Common myeloid progenitor, CD34-positive (primary cell): ENCODE measurements at regions of chr18 and their contacts with region 1.

Region 1: GRCh38 chr18:35029770-35030169 is 11.4 kb upstream of the MAPRE2 start:
- DNase-seq: peak in 2 of 3 donors; percentile 68 to 77
- H3K4me3 ChIP-seq: peak overlapping the region in 6 of 7 experiments; percentile 7 to 72 (median 50)
- H3K27ac ChIP-seq: peak overlapping the region in 1 of 2 experiments; percentile 69
- H3K4me1 ChIP-seq: peaks cover 12 to 32% (median 15%) of the 10 kb centered on the region in 4 experiments
- H3K27me3 ChIP-seq: no peaks in the 10 kb centered on the region

Region 2: GRCh38 chr18:34514238-34514637 is 515.5 kb before region 1 on chr18:
- CTCF ChIA-PET with region 1: no interaction called
- POLR2A ChIA-PET with region 1: no interaction called
- DNase-seq: no peak
- H3K4me3 ChIP-seq: no peak overlapping the region
- H3K27ac ChIP-seq: no peak overlapping the region
- H3K4me1 ChIP-seq: no peaks in the 10 kb centered on the region
- H3K27me3 ChIP-seq: no peaks in the 10 kb centered on the region

Region 3: GRCh38 chr18:34971313-34971712 is 58.5 kb before region 1 on chr18:
- CTCF ChIA-PET with region 1: no interaction called
- POLR2A ChIA-PET with region 1: no interaction called
- DNase-seq: peak in 1 of 3 donors; percentile 4
- H3K4me3 ChIP-seq: no peak overlapping the region
- H3K27ac ChIP-seq: no peak overlapping the region
- H3K4me1 ChIP-seq: peaks cover 0 to 4% (median 4%) of the 10 kb centered on the region in 4 experiments
- H3K27me3 ChIP-seq: no peaks in the 10 kb centered on the region

Region 4: DNA sequence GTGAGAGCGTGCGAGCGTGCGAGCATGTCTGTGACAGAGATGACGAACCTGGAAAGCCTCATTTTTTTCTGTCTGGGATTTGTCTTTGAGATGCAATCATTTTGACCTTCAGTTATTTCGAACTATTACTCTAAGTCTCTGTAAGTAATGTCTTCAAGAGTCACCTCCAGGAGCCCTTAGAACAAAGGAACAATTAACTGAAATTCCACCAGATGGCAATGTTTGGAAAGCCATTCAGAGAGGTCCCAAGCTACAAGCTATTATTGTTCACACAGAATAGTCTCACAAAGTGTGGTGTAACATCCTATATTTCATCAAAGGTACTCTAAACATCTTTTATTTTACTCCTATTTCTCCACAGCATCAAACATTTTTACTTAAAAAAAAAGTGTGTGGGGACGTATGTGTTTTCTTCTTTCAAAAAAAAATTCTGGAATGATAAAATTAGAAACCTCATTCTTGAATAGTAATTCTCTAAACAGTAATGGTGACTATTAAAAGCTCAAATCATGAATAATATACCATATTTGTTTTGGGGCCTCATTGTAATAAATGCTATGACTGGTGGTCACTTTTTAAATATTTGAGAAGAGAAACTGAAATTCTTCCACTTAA is 23.7 kb before region 1 on chr18:
- CTCF ChIA-PET with region 1: interaction called, 11 read pairs
- POLR2A ChIA-PET with region 1: no interaction called
- DNase-seq: peak; percentile 71 to 83 (median 76)
- H3K4me3 ChIP-seq: no peak overlapping the region
- H3K27ac ChIP-seq: no peak overlapping the region
- H3K4me1 ChIP-seq: no peaks in the 10 kb centered on the region
- H3K27me3 ChIP-seq: no peaks in the 10 kb centered on the region

Region 5: DNA sequence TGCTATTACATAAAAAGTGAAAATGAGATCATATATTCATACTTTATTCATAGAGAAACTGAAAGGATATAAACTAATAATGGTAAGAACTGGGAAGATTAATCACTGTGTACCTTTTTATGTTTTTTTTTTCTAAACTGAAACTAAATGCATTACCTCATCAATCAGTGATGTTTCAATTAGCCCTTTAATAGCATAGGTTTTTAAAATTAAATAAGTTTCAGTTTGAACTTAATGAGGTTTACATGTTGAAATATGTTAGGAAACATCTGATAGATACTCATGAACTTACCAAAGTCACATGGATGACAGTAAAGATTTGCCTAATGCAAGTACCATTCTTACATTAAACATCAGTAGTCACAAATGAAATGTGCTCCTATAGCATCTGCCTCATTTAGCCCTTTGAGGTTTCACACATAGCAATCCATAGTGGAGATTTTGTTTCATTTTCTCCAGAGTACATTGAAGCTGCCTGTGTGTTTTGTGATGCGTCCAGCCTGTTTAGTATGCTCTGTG is 20.3 kb after region 1 on chr18:
- CTCF ChIA-PET with region 1: interaction called, 47 read pairs
- POLR2A ChIA-PET with region 1: interaction called, 4 read pairs
- DNase-seq: peak in 2 of 3 donors; percentile 35 to 53
- H3K4me3 ChIP-seq: peak overlapping the region in 5 of 7 experiments; percentile 12 to 63 (median 43)
- H3K27ac ChIP-seq: peak overlapping the region; percentile 1 to 54
- H3K4me1 ChIP-seq: peaks cover 41 to 57% (median 55%) of the 10 kb centered on the region in 4 experiments
- H3K27me3 ChIP-seq: no peaks in the 10 kb centered on the region

Region 6: GRCh38 chr18:35114305-35114704 is 84.5 kb after region 1 on chr18:
- CTCF ChIA-PET with region 1: interaction called, 20 read pairs
- POLR2A ChIA-PET with region 1: interaction called, 4 read pairs
- DNase-seq: peak in 1 of 3 donors; percentile 26
- H3K4me3 ChIP-seq: no peak overlapping the region
- H3K27ac ChIP-seq: no peak overlapping the region
- H3K4me1 ChIP-seq: peaks cover 0 to 34% (median 21%) of the 10 kb centered on the region in 4 experiments
- H3K27me3 ChIP-seq: no peaks in the 10 kb centered on the region

Region 7: DNA sequence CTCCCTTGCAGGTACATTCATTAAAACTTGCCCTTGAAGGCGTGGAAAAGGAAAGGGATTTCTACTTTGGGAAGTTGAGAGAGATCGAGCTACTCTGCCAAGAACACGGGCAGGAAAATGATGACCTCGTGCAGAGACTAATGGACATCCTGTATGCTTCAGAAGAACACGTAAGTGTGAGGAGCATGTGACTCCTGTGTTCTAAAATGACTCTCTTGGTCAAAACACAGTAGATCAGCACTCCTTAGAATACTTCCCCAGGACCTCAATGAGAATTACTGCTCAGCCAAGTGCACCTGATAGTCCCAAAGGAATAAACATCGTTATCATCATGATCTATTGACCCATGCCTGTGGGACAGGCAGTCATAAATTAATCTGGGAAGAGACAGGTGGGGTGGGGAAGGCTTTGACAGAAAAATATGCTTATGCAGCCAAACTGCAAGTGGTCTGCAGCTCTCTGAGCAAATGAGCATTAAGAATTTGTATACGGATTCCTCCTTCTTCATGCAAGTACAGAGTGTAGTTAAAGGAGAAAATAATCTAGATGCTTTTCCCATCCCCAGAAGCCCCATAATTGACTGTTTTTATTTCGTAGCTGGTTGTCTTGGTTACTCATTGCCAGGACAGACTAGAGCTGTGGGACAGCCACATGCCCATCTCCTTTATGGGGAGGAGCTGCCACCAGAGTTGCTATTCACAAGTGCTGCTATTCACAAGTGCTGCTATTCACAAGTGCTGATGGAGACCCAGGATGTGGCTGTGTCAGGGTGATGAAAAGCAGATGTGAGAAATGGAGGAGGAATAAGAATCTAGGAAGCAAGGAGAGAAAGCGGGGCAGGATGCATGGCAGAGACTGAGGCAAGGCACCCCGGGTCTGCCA is 102.5 kb after region 1 on chr18:
- CTCF ChIA-PET with region 1: interaction called, 89 read pairs
- POLR2A ChIA-PET with region 1: no interaction called
- DNase-seq: no peak
- H3K4me3 ChIP-seq: no peak overlapping the region
- H3K27ac ChIP-seq: no peak overlapping the region
- H3K4me1 ChIP-seq: no peaks in the 10 kb centered on the region
- H3K27me3 ChIP-seq: no peaks in the 10 kb centered on the region